ENCODE measurements at regions of chr13 and their contacts with region 1.

Region 1: DNA sequence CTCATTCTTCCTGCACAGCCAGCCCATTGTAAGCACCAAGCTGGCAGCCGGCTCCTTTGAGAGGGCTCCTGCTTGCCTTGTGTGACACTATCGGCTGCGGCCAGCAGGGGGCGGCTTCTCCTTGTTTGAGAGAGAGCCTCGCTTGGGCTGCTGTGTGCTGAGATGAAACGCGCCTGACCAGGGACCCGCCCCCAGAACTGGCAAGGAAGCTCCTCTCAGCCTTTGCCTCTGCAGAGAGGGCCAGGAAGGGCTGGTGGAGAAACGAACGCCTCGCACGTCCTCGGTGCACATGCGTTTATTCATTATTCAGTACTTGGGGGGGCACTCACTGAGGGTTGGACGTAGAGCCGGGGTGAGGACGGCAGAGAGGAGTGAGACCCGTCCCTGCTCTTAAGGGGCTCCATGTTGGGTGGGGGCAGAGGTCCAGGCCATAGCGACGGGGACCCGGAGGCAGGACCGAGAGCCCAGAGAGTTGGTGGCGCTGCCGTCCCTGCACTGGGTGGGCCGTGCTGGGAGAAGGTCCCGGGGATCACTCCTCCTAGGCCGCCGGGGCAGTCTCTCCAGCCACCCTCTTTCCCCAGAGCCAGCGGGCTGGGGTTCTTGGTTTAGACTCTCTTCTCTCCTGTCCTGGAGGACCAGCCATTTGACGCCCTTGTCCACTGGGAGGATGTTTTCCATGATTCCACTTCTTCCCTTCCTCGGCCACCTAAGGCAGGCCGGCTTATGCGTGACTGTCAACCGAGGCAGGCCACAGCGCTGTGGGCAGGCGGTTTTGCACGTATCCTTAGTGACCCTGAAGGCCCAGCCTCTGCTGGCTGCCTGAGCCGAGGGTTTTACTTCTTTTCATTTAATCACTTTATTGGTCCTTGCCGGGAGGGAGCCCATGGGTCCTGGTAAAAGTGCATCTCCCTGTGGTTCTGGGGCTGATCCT is 174.5 kb downstream of the KATNAL1 start:
- DNase-seq: peak; percentile 81
- H3K4me3 ChIP-seq: no peak overlapping the region
- H3K27ac ChIP-seq: no peak overlapping the region
- H3K27me3 ChIP-seq: no peaks in the 10 kb centered on the region
- CTCF ChIP-seq: peak; percentile 89

Region 2: DNA sequence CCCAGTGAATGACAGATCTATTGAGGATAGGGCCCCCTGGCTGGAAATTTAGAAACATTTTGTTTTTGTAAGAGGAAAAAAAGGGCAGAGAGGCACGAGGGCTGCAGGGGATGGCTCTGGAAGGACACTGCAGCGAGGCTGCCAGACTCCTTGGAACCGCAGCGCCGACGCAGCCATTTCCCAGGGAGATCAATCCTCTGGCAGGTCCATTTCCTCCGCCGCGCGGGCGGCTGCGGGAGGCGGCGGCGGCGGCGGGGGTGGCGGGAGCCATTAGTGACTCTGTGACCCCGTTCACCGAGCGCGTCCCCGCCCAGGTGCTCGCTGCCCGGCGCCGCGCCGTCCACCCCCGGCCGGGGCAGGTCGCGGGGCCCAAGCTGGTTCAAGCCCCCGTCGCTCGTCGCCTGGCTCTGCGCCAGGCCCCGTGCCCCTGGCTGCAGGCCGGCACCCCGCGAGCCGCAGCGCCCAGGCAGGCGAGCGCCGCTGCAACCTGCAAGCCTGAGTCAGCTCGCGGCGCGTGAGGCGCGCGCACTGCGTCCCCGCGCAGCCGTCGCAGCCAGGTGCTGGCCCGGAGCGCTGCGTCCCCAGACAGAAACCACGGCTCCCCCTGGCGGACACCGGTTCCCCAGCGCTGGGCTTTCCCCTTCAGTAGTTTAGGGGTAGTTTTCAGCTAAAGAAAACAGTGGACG is 18.2 kb before region 1 on chr13:
- CTCF ChIA-PET with region 1: interaction called, 17 read pairs
- POLR2A ChIA-PET with region 1: interaction called, 4 read pairs
- DNase-seq: no peak
- H3K4me3 ChIP-seq: peak overlapping the region; percentile 58
- H3K27ac ChIP-seq: no peak overlapping the region
- H3K27me3 ChIP-seq: peaks cover 5% of the 10 kb centered on the region
- CTCF ChIP-seq: peak; percentile 90

Region 3: DNA sequence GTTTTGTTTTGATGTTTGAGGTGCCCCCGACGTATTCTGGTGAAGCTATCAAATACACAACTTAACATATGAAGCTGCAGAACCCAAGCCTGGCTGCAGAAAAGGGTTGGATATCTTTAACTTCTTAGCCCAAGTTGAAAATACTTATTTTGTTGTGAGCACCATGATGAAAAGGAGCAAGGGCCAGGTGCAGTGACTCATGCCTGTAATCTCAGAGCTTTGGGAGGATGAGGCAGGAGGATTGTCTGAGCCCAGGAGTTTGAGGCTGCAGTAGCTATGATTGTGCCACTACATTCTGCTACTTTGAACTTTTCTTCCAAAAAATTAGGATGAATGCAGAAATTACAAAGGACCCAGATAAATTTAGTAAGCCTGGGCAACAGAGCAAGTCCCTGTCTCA is 245.3 kb after region 1 on chr13:
- CTCF ChIA-PET with region 1: no interaction called
- POLR2A ChIA-PET with region 1: no interaction called
- DNase-seq: no peak
- H3K4me3 ChIP-seq: no peak overlapping the region
- H3K27ac ChIP-seq: no peak overlapping the region
- H3K27me3 ChIP-seq: no peaks in the 10 kb centered on the region
- CTCF ChIP-seq: no peak

Region 4: GRCh38 chr13:30388406-30389283 is 255.8 kb after region 1 on chr13:
- CTCF ChIA-PET with region 1: interaction called, 13 read pairs
- POLR2A ChIA-PET with region 1: no interaction called
- DNase-seq: peak; percentile 78
- H3K4me3 ChIP-seq: peak overlapping the region; percentile 25
- H3K27ac ChIP-seq: peak overlapping the region; percentile 91
- H3K27me3 ChIP-seq: peaks cover 3% of the 10 kb centered on the region
- CTCF ChIP-seq: no peak

Region 5: DNA sequence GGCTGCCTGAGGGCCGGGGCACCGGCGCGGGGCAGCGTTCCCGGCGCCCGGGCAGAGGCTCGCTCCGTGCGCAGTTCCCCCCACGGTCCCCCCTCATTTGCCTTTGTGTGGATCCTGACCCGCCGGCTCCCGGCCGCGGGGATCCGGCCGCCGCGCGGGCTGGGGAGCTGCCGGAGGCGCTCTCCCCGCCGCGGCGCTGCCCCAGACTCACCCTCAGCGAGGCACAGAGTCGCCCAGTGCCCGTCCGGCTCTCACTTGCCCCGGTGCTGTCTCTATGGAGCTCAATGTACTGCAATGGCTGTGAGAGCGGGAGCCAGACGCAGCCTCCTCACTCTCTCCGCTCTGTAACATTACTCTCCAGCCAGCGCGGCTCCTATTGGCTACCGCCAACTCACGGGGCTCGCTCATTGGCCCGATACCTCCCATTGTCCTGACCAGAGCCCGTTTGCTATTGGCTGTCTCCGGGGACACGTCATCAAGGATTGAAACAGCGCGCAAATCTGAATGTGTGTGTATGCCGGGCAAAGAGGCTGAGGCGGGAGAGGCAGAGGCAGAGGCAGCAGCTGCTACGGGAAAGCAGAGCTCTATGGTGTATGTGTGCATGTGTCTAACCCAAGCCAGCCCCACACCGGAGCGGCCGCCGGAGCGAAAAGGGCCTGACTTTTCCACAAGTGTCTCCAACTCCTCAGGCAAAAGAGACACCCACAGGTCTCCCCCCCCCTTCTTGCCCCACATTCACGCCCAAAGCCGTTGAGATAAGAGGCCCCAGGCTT is 332.9 kb after region 1 on chr13 and contains the start of gene HMGB1:
- CTCF ChIA-PET with region 1: interaction called, 36 read pairs
- POLR2A ChIA-PET with region 1: no interaction called
- DNase-seq: peak; percentile 97
- H3K4me3 ChIP-seq: peak within 1 kb of the TSS; percentile 64
- H3K27ac ChIP-seq: peak within 1 kb of the TSS; percentile 84
- H3K27me3 ChIP-seq: no peaks in the 10 kb centered on the region
- CTCF ChIP-seq: no peak
- polyA plus RNA-seq, gene HMGB1: 186 and 223 TPM in 2 replicates

Region 6: DNA sequence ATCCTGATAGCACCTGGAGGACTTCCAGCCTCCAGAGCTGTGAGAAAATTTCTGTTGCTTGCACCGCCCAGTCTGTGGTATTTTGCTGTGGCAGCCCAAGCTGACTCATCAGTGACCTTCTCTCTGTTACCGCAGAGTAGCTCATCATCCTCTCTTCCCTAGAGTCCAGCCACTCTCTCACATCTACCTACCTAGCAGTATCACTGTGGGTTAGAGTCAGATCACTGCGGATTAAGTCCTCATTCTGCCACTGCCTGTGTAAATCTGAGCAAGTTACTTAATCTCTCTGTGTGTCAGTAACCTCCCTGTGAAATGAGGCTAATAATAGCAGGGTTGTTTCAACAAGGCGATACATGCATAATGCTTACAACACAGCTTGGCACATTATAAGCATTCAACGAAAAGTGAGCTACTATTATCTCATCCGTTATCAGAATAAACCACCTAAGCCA is 444.5 kb after region 1 on chr13:
- CTCF ChIA-PET with region 1: interaction called, 15 read pairs
- POLR2A ChIA-PET with region 1: no interaction called
- DNase-seq: peak; percentile 59
- H3K4me3 ChIP-seq: no peak overlapping the region
- H3K27ac ChIP-seq: no peak overlapping the region
- H3K27me3 ChIP-seq: no peaks in the 10 kb centered on the region
- CTCF ChIP-seq: no peak

Region 7: GRCh38 chr13:31035185-31035965 is 902.5 kb after region 1 on chr13:
- CTCF ChIA-PET with region 1: interaction called, 10 read pairs
- POLR2A ChIA-PET with region 1: no interaction called
- DNase-seq: no peak
- H3K4me3 ChIP-seq: no peak overlapping the region
- H3K27ac ChIP-seq: no peak overlapping the region
- H3K27me3 ChIP-seq: peaks cover 7% of the 10 kb centered on the region
- CTCF ChIP-seq: no peak

Measured in AG04450 (cell line).